Posterior vena cava (tissue), 2 donors: ENCODE measurements at regions of chr1 and their contacts with region 1.

Region 1: GRCh38 chr1:80722611-80723010 is 1078.1 kb upstream of the ADGRL2 start:
- DNase-seq: no peak

Region 2: DNA sequence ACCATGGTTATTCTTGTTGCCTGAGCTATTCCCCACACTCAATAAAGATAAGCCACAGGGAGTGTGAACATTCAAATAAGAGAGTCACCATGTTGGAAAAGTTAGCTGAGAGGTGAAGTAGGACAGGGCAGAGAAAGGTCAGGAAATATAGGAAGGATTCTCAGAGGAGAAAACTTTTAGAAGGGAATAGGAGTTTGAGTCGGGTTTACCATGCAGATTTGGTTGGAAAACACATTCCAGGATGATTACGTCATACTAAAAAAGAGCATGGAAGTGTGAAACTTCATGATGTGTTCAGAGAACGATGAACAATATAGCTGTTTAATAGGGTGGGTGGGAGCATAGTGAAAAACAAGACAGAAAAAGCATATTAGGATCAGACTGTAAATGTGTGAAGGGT is 47.2 kb before region 1 on chr1:
- intact Hi-C with region 1: loop called in 1 of 2 experiments (anchors 2 kb)
- DNase-seq: no peak

Region 3: DNA sequence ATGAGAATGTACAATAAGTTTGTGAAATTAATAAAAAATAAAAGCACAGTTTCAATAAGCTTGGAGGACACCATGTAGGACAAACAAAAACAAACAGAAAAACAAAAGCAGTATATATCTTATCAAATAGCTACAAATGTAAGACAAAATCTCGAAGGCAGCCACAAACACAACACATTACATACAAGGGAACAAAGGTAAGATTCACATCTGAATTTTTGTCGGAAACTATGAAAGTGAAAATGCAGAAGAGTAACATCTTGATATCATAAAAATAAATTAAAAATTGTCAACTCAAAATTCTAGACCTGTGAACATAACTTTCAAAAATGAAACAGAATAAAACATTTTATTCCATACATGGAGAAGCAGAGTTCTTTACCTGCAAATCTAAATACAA is 28.6 kb after region 1 on chr1:
- intact Hi-C with region 1: loop called in 1 of 2 experiments (anchors 1 kb)
- DNase-seq: no peak